Activated naive CD4-positive, alpha-beta T cell treated with anti-CD3 and anti-CD28 coated beads for 36 hours (primary cell): ENCODE measurements at regions of chr7 and their contacts with region 1.

Region 1: GRCh38 chr7:36723951-36724664 is at the start of gene AOAH:
- DNase-seq: peak; percentile 88
- H3K4me3 Mint-ChIP-seq: peak within 1 kb of the TSS; percentile 63
- H3K27ac Mint-ChIP-seq: peak within 1 kb of the TSS; percentile 84
- H3K4me1 Mint-ChIP-seq: peaks cover 70% of the 10 kb centered on the region
- H3K27me3 Mint-ChIP-seq: no peaks in the 10 kb centered on the region
- total RNA-seq, gene AOAH: 0.67 to 1.2 TPM

Region 2: GRCh38 chr7:36677769-36678437 is 46.2 kb before region 1 on chr7:
- CTCF ChIA-PET with region 1: no interaction called
- intact Hi-C with region 1: loop called (anchors 1 kb)
- DNase-seq: peak; percentile 79
- H3K4me3 Mint-ChIP-seq: peak overlapping the region; percentile 31
- H3K27ac Mint-ChIP-seq: peak overlapping the region; percentile 57
- H3K4me1 Mint-ChIP-seq: peaks cover 38% of the 10 kb centered on the region
- H3K27me3 Mint-ChIP-seq: peaks cover 2% of the 10 kb centered on the region

Region 3: DNA sequence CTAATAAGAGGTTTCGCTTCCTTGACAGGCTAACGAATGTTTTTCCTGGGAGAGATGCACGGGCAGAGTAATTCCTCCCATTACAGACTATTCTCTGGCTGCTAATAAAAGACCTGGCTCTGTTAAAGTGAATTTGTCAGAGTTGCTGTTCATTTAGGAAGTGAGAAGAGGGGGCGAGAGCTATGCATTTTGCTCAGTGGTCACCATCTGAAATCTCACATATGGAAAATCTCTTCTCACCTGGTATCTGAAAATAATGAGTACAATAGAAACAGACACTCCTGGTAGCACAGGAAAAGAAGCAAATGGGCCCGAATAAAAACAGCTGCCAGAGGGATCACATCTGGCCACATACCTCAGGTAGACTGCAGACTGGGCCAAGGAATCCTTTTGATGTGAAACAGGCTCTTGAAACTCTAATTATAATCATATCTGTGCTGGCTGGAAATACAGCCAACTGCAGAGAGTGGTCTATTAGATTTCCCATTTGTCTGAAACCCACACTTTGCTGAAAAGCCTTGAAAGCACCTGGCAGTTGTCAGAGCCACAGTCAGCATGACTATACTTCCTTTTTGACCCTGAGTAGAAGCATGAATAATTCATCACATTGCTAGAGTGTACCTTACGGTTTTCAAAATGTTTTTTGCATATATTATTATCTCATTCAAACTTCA is 33.5 kb before region 1 on chr7:
- CTCF ChIA-PET with region 1: no interaction called
- intact Hi-C with region 1: loop called (anchors 2 kb)
- DNase-seq: no peak
- H3K4me3 Mint-ChIP-seq: no peak overlapping the region
- H3K27ac Mint-ChIP-seq: no peak overlapping the region
- H3K4me1 Mint-ChIP-seq: peaks cover 44% of the 10 kb centered on the region
- H3K27me3 Mint-ChIP-seq: no peaks in the 10 kb centered on the region

Region 4: DNA sequence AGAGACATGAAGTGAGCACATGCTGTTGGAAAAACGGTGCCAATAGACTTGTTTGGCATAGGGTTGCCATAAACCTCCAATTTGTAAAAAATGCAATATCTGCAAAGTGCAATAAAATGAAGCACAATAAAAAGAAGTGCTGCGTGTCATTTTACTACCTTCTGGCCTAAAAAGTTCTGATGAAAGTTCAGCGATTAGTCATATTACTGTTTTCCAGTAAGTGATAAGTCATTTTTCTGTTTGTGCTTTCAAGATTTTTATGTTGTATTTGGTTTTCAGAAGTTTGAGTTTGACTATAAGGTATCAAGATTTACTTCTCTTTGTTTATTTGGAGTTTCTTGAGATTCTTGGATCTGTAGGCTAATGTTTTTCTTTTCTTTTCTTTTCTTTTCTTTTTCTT is 16.6 kb before region 1 on chr7:
- CTCF ChIA-PET with region 1: interaction called, 6 read pairs
- intact Hi-C with region 1: loop called (anchors 1 kb)
- DNase-seq: no peak
- H3K4me3 Mint-ChIP-seq: no peak overlapping the region
- H3K27ac Mint-ChIP-seq: peak overlapping the region; percentile 47
- H3K4me1 Mint-ChIP-seq: peaks cover 28% of the 10 kb centered on the region
- H3K27me3 Mint-ChIP-seq: no peaks in the 10 kb centered on the region

Region 5: DNA sequence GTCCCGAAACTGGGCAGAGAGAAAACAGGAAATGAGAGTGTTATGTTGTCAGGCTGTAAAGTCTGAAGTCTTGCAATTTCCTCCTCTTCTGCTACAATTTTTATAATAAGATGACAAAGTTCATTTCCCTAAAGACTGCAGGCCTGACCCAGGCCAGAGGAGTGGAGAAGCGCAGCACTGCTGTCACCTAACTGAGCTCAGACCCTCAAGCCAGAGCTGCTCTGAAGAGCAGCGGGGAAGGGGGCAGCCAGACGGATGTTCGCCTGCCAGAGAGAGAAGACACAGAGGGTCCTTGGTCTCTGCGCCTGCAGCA is 12.7 kb after region 1 on chr7:
- CTCF ChIA-PET with region 1: no interaction called
- intact Hi-C with region 1: loop called (anchors 1 kb)
- DNase-seq: no peak
- H3K4me3 Mint-ChIP-seq: no peak overlapping the region
- H3K27ac Mint-ChIP-seq: no peak overlapping the region
- H3K4me1 Mint-ChIP-seq: peaks cover 27% of the 10 kb centered on the region
- H3K27me3 Mint-ChIP-seq: no peaks in the 10 kb centered on the region

Region 6: GRCh38 chr7:36777062-36777461 is 53.0 kb after region 1 on chr7:
- CTCF ChIA-PET with region 1: no interaction called
- intact Hi-C with region 1: loop called (anchors 1 kb)
- DNase-seq: peak; percentile 46
- H3K4me3 Mint-ChIP-seq: peak overlapping the region; percentile 48
- H3K27ac Mint-ChIP-seq: no peak overlapping the region
- H3K4me1 Mint-ChIP-seq: peaks cover 68% of the 10 kb centered on the region
- H3K27me3 Mint-ChIP-seq: no peaks in the 10 kb centered on the region

Region 7: DNA sequence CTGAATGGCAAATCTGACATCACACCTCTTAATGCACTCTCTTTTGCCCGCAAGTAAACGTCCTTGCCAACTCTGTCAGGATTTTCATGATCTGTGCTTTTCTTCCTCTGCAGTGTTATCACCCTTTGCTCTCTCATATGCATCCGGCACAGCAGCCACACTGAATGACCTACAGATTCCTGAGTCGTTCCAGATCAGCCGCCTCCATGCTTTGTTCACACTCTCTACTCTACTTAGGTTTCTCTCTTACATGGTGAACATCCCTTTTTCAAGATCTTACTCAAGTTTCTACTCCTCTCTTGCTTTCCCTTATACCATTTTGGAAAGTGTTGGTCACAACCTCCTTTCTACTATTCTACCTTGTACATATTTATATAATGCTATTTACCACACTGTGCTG is 127.9 kb after region 1 on chr7:
- CTCF ChIA-PET with region 1: no interaction called
- intact Hi-C with region 1: loop called (anchors 5 kb)
- DNase-seq: peak; percentile 18
- H3K4me3 Mint-ChIP-seq: no peak overlapping the region
- H3K27ac Mint-ChIP-seq: peak overlapping the region; percentile 54
- H3K4me1 Mint-ChIP-seq: peaks cover 17% of the 10 kb centered on the region
- H3K27me3 Mint-ChIP-seq: no peaks in the 10 kb centered on the region